Panc1 (cell line): ENCODE measurements at regions of chr6 and their contacts with region 1.

Region 1: DNA sequence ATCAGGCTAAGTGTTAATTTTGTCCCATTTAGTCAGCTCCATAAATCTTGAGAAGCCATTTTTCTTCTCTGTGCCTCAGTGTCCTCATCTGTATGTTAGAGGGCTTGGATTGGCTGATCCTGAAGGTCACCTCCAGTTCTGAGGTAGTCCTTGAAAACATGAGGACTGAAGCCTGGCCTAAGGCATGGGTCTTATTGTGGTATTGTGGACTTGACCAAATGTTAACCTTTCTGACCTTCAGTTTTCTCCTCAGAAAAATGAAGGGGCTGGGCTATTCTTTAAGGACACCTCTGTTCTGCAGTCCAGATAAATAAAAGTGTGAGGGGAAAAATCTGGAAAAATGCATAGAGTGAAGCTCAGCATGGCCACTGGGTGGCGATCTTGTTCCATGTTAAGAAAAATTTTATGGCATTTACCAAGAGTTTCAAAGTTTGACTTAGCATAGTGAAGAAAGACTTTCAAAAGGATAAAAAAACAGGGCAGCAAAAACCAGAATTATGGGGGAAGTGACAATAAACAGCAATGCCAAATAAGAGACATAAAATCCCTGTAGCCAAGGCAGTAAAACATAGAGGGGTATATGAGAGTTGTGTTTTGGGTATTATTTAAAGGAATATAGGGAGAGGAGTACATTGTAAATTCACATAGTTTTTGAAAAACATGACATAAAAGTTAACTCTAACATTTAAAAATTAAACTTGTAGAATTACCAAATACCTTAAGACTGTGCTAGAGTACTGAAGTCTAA is 13.2 kb upstream of the TFB1M start:
- DNase-seq: peak; percentile 55
- ATAC-seq: peak; percentile 77
- H3K4me3 ChIP-seq: no peak overlapping the region
- H3K27ac ChIP-seq: peak overlapping the region; percentile 40; the same call in 1 of the 2 replicates
- H3K4me1 ChIP-seq: no peaks in the 10 kb centered on the region; the same call in 1 of the 2 replicates
- H3K27me3 ChIP-seq: no peaks in the 10 kb centered on the region
- CTCF ChIP-seq: peak; percentile 78

Region 2: GRCh38 chr6:155188707-155189496 is 138.6 kb before region 1 on chr6:
- CTCF ChIA-PET with region 1: no interaction called
- POLR2A ChIA-PET with region 1: no interaction called
- in situ Hi-C with region 1: no loop called
- intact Hi-C with region 1: no loop called
- DNase-seq: no peak
- ATAC-seq: peak; percentile 48
- H3K4me3 ChIP-seq: peak overlapping the region in 1 of 2 experiments; percentile 37; a peak in 2 of 4 replicates
- H3K27ac ChIP-seq: peak overlapping the region; percentile 96
- H3K4me1 ChIP-seq: peaks cover 59% of the 10 kb centered on the region
- H3K27me3 ChIP-seq: no peaks in the 10 kb centered on the region
- CTCF ChIP-seq: no peak

Region 3: DNA sequence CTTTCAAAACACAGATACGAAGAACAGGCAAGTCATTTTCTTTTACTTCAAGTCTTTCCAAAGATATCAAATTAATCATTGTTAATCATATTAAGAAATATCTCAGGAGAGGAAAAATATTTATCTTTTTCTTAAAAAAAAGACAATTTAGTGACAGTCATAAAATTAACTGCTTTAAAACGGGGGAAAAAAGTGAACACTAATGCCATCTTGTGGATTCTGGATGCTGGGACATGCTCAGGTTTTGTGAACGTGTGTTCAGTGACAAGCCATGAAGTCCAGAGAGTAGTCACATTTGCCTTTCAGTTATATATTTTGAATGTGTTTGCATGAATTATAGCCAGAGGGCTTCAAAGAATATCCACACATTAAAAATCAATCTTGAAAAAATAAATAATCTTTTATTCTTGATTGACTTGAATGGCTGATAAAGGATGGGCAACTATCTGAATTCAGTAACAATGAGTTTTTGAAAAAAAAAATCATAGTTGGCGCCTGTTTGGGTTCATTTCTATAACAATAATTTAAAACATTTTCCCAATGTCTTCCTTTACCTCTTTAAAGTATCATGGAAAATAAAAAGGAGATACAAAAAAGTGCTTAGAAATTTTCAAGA is 202.8 kb after region 1 on chr6:
- CTCF ChIA-PET with region 1: no interaction called
- POLR2A ChIA-PET with region 1: no interaction called
- in situ Hi-C with region 1: no loop called
- intact Hi-C with region 1: loop called (anchors 2 kb)
- DNase-seq: no peak
- ATAC-seq: peak; percentile 76; the same call in 1 of the 2 replicates
- H3K4me3 ChIP-seq: no peak overlapping the region
- H3K27ac ChIP-seq: no peak overlapping the region
- H3K4me1 ChIP-seq: no peaks in the 10 kb centered on the region
- H3K27me3 ChIP-seq: no peaks in the 10 kb centered on the region
- CTCF ChIP-seq: peak; percentile 77; the same call in 1 of the 2 replicates

Region 4: DNA sequence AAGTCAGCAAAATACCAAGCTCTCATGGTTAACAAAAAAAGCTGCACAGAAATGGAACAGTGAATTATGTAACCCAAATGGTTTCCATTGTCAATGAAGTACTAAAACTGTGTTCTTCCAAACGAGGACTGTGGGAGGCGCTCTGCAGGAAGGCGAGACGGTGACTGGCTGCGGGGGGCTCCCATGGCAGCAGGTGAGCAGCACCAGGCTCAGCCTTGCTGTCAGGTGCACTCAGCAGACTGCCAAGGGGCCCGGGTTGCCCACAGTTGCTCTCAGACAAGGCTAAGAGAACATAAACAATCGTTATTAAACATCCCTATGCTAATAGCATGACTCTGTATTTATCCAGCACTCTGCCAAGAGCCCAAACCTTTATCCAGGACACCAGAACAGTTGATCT is 819.4 kb after region 1 on chr6:
- CTCF ChIA-PET with region 1: no interaction called
- POLR2A ChIA-PET with region 1: no interaction called
- in situ Hi-C with region 1: no loop called
- intact Hi-C with region 1: no loop called
- DNase-seq: no peak
- ATAC-seq: no peak
- H3K4me3 ChIP-seq: no peak overlapping the region
- H3K27ac ChIP-seq: no peak overlapping the region
- H3K4me1 ChIP-seq: no peaks in the 10 kb centered on the region
- H3K27me3 ChIP-seq: no peaks in the 10 kb centered on the region
- CTCF ChIP-seq: no peak